ENCODE measurements at regions of chr2 and their contacts with region 1.

Region 1: DNA sequence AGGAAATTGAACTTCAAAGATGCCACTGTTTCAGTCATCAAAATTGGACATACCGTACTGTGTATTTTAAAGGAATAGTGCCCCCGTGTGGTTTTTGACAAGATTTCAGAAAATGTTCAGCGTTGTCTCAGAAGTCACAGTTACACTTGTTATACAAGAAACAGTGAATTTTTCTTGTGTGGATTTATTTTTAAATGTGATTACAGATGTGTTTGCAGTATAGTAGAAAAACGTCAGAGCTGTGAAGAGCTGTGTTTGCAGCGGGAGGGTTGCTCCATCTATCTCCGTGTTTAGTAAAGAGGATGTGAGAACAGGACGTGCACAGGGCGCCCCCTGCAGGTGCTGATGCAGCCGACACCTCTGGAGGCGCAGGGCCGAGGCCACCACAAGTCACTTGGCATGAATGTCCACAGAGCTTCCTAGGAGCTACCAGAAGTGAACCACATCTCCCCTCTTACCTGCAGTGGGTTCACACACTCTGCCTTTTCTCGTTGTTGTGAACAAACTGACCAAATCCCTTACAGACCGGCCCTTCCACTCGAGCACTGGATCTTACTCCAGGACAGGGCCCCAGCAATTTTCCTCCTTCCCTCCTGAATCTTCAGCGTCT is 73.1 kb downstream of the CACNB4 start:
- DNase-seq: peak; percentile 10
- H3K4me3 ChIP-seq: 0 out of 2 replicates have a peak overlapping the region, but pooled peaks have one; percentile 19
- H3K27me3 ChIP-seq: no peaks in the 10 kb centered on the region
- CTCF ChIP-seq: peak; percentile 98

Region 2: GRCh38 chr2:151999053-151999452 is 26.7 kb before region 1 on chr2:
- CTCF ChIA-PET with region 1: interaction called, 18 read pairs
- POLR2A ChIA-PET with region 1: no interaction called
- DNase-seq: no peak
- H3K4me3 ChIP-seq: no peak overlapping the region
- H3K27me3 ChIP-seq: no peaks in the 10 kb centered on the region
- CTCF ChIP-seq: peak; percentile 84

Region 3: DNA sequence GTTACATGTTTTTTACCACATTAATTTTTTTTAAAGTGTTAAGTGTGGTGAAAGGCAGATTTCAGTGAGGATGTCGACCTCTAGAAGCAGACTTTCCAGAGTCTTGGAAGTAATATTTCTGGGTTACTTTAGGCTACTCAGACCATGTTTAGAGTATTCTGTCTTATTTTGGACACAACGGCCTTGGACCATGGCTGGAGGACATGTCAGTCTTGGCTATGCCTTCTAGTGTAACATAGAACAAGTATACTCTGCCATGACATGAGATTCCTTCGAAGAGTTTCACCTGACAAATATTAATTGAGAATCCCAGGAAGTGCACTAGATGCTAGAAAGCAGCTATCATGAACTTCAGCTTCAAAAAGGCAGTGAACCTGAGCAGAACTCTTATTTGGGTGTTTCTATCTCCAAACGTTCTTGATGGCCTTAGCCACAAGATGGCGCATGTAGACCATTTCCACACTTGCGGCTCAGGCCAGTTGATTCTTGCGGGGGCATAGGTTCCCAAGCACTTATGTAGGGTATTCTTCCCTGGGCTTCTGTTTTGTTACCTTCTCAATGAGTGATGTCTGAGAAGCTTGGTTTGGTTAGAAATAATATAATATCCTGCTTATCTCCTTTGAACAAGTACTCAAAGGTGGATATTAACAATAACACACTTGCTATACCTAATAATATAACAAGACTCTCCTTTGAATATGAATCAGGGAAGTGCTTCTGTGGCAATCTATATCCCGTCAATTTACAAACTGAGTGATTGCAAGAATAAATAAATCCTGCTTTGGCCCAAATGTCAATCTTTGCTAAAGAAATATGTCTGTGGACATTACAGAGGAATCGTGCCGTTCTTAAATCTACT is 11.1 kb after region 1 on chr2:
- CTCF ChIA-PET with region 1: interaction called, 40 read pairs
- POLR2A ChIA-PET with region 1: no interaction called
- DNase-seq: no peak
- H3K4me3 ChIP-seq: no peak overlapping the region
- H3K27me3 ChIP-seq: peaks cover 6% of the 10 kb centered on the region
- CTCF ChIP-seq: peak; percentile 80

Region 4: GRCh38 chr2:152047819-152048471 is 22.2 kb after region 1 on chr2:
- CTCF ChIA-PET with region 1: interaction called, 10 read pairs
- POLR2A ChIA-PET with region 1: no interaction called
- DNase-seq: no peak
- H3K4me3 ChIP-seq: no peak overlapping the region
- H3K27me3 ChIP-seq: peaks cover 8% of the 10 kb centered on the region
- CTCF ChIP-seq: peak; percentile 29

Region 5: DNA sequence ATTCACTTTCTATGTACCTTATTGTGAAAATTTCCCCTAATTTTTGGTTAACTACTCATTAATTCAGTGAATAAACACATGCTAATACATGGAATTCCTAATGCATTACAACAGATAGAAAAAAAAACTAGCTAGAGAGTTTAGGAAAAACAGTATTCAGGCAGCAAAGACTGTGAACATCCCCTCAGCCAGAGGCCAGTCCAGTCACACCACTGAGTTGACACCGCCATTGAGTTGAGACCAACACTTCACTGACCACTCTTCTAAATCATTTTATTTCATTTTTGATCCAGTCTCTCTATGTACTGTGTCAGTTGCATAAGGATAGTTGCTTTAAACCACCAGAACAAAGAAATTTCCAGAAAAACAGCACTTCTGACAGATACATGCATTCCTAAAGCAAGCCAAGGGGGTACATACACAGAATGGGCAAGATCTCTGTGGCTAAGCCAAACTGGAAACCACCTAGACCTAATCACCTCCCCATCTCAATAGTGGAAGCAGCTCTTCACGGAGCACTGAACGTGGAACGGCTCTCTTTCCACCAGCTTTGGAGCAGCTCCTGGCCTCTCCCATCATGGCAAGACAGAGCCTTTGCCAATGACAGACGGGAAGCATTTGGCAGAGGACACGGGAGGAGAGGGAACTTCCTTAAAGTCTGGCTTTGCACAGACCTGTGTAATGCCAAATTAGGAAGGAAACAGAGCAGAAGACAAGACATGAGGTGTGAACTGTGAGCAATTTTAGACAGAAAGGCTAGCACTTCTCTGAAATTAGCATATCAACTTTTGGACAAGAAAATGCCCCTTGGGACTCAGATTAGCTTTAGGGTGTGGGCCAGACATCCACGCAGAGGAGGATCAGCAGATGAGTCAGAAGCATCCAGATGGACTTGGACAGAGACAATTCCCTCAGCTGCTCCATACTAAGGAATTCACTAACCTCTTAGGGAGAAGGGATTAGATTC is 36.6 kb after region 1 on chr2:
- CTCF ChIA-PET with region 1: interaction called, 11 read pairs
- POLR2A ChIA-PET with region 1: no interaction called
- DNase-seq: peak; percentile 11
- H3K4me3 ChIP-seq: no peak overlapping the region
- H3K27me3 ChIP-seq: peaks cover 7% of the 10 kb centered on the region; the same call in 1 of the 2 replicates
- CTCF ChIP-seq: no peak

Region 6: GRCh38 chr2:152115952-152116351 is 90.2 kb after region 1 on chr2:
- CTCF ChIA-PET with region 1: no interaction called
- POLR2A ChIA-PET with region 1: no interaction called
- DNase-seq: no peak
- H3K4me3 ChIP-seq: no peak overlapping the region
- H3K27me3 ChIP-seq: no peaks in the 10 kb centered on the region
- CTCF ChIP-seq: no peak

Region 7: DNA sequence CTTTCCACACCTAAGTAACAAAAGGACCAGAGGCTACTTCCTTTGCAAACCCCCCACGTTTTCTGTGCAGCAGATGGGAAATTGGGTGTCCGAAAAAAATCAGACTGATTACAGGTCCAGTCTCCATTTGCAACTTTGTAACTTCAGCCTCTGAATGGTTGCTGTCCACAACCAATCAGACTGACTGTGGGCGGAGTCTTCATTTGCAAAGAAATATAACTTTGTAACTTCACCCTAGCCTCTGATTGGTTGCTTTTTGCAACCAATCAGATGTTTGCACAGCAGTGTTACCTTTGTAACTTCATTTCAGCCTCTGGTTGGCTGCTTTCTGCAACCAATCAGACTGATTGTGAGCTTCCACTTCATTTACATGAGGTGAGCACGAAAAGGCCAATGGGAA is 100.9 kb after region 1 on chr2:
- CTCF ChIA-PET with region 1: no interaction called
- POLR2A ChIA-PET with region 1: no interaction called
- DNase-seq: no peak
- H3K4me3 ChIP-seq: no peak overlapping the region
- H3K27me3 ChIP-seq: no peaks in the 10 kb centered on the region
- CTCF ChIP-seq: no peak